ENCODE measurements at regions of chr20 and their contacts with region 1.

Region 1: DNA sequence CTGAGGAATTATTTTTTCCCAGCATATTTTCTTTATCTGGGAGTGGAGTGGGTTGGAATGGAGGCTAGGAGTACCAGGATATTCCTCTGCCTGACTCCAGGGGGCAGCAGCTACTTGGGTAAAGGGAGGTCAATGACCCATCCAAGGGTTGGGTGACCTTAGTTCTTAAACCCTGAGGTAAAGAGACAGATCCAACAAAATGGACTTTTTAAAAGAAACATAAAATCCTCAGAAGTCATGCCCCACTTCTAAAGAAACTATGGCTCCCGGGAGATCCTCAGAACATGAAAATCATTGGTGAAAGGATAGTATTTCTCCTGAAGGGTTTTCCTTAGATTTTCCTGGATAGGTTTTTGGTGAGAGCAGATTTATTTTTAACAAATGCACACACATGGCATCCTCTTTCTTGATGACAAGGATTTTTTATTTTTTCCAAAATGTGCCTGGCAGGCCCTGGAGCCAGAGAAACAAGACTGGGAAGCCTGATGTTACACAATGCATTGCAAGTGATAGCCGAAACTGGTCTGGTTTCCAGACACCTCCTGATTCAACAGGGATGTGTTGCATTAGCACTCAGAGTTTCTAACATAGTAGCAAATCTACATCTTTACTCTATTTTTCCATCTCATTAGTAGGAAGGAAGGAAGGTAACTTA is 240.9 kb upstream of the BTBD3 start:
- DNase-seq: peak; percentile 42
- ATAC-seq: peak; percentile 99
- H3K4me3 ChIP-seq: no peak overlapping the region
- H3K27ac ChIP-seq: no peak overlapping the region
- H3K4me1 ChIP-seq: no peaks in the 10 kb centered on the region
- H3K27me3 ChIP-seq: peaks cover 3% of the 10 kb centered on the region; the same call in 1 of the 2 replicates
- CTCF ChIP-seq: peak; percentile 91
- POLR2A ChIP-seq: no peak
- RAD21 ChIP-seq: peak; percentile 97

Region 2: GRCh38 chr20:11229772-11230171 is 447.0 kb before region 1 on chr20:
- CTCF ChIA-PET with region 1: no interaction called
- POLR2A ChIA-PET with region 1: no interaction called
- dilution Hi-C with region 1: no loop called
- in situ Hi-C with region 1: no loop called
- intact Hi-C with region 1: no loop called
- DNase-seq: peak; percentile 99
- ATAC-seq: peak; percentile 89
- H3K4me3 ChIP-seq: no peak overlapping the region
- H3K27ac ChIP-seq: peak overlapping the region; percentile 64
- H3K4me1 ChIP-seq: peaks cover 3% of the 10 kb centered on the region
- H3K27me3 ChIP-seq: no peaks in the 10 kb centered on the region
- CTCF ChIP-seq: no peak
- POLR2A ChIP-seq: no peak
- RAD21 ChIP-seq: peak; percentile 35; the same call in 1 of the 2 replicates

Region 3: GRCh38 chr20:11890331-11891080 is 213.7 kb after region 1 on chr20:
- CTCF ChIA-PET with region 1: no interaction called
- POLR2A ChIA-PET with region 1: no interaction called
- dilution Hi-C with region 1: no loop called
- in situ Hi-C with region 1: no loop called
- intact Hi-C with region 1: loop called (anchors 1 kb)
- DNase-seq: peak; percentile 91
- ATAC-seq: peak; percentile 91
- H3K4me3 ChIP-seq: peak overlapping the region; percentile 85
- H3K27ac ChIP-seq: peak overlapping the region; percentile 79
- H3K4me1 ChIP-seq: peaks cover 3% of the 10 kb centered on the region; the same call in 1 of the 2 replicates
- H3K27me3 ChIP-seq: no peaks in the 10 kb centered on the region
- CTCF ChIP-seq: no peak
- POLR2A ChIP-seq: 0 out of 2 replicates have a peak, but pooled peaks have one; percentile 21
- RAD21 ChIP-seq: no peak

Region 4: DNA sequence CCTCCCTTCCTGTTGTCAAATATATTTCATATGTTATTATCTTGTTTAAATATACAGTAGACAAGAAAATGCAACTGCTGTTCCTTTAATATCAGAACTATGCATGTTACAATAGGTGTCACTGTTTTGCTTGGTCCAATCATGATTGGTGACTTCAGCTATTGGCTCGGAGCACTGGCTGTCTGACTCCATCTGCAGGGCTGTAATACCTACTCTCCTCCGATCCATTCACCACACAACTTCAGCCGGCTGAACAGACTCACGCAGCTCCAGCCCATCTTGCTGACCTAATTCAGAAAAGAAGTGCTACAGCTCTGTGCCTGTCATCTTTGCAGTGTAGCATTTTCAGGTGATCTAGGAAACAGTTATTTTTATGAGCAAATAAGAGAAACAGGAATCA is 240.9 kb after region 1 on chr20 and contains the start of gene BTBD3:
- CTCF ChIA-PET with region 1: no interaction called
- POLR2A ChIA-PET with region 1: no interaction called
- dilution Hi-C with region 1: no loop called
- in situ Hi-C with region 1: no loop called
- intact Hi-C with region 1: loop called (anchors 2 kb)
- DNase-seq: peak; percentile 79
- ATAC-seq: peak; percentile 96
- H3K4me3 ChIP-seq: peak within 1 kb of the TSS; percentile 45
- H3K27ac ChIP-seq: peak within 1 kb of the TSS; percentile 29; the same call in 1 of the 2 replicates
- H3K4me1 ChIP-seq: peaks cover 8% of the 10 kb centered on the region
- H3K27me3 ChIP-seq: no peaks in the 10 kb centered on the region
- CTCF ChIP-seq: no peak
- POLR2A ChIP-seq: peak; percentile 62; the same call in 1 of the 2 replicates
- RAD21 ChIP-seq: peak; percentile 23; the same call in 1 of the 2 replicates
- total RNA-seq, gene BTBD3: 44.6 and 44.7 TPM in 2 replicates

Region 5: DNA sequence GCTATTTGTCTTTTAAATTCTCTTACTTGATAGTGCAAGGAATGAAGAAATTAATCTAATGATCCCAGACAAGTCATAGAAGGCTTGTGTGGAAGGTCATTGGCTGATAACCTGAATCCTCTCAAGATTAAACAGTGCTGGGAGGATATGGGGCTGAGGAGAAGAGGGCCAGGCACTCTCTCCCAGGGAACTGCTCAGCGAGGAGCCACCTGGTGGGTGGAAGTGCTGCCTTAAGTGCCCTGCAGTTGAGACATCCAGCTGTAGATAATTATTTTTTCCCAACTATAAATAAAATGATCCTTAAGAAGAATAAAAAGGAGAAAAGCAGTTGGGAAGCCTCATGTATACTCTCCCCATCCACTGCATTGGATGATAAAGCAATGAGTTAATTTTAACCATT is 288.8 kb after region 1 on chr20:
- CTCF ChIA-PET with region 1: no interaction called
- POLR2A ChIA-PET with region 1: no interaction called
- dilution Hi-C with region 1: no loop called
- in situ Hi-C with region 1: no loop called
- intact Hi-C with region 1: loop called (anchors 5 kb)
- DNase-seq: peak; percentile 4
- ATAC-seq: no peak
- H3K4me3 ChIP-seq: no peak overlapping the region
- H3K27ac ChIP-seq: no peak overlapping the region
- H3K4me1 ChIP-seq: peaks cover 2% of the 10 kb centered on the region; the same call in 1 of the 2 replicates
- H3K27me3 ChIP-seq: no peaks in the 10 kb centered on the region; the same call in 1 of the 2 replicates
- CTCF ChIP-seq: 0 out of 2 replicates have a peak, but pooled peaks have one; percentile 1
- POLR2A ChIP-seq: no peak
- RAD21 ChIP-seq: 0 out of 2 replicates have a peak, but pooled peaks have one; percentile 9

Region 6: DNA sequence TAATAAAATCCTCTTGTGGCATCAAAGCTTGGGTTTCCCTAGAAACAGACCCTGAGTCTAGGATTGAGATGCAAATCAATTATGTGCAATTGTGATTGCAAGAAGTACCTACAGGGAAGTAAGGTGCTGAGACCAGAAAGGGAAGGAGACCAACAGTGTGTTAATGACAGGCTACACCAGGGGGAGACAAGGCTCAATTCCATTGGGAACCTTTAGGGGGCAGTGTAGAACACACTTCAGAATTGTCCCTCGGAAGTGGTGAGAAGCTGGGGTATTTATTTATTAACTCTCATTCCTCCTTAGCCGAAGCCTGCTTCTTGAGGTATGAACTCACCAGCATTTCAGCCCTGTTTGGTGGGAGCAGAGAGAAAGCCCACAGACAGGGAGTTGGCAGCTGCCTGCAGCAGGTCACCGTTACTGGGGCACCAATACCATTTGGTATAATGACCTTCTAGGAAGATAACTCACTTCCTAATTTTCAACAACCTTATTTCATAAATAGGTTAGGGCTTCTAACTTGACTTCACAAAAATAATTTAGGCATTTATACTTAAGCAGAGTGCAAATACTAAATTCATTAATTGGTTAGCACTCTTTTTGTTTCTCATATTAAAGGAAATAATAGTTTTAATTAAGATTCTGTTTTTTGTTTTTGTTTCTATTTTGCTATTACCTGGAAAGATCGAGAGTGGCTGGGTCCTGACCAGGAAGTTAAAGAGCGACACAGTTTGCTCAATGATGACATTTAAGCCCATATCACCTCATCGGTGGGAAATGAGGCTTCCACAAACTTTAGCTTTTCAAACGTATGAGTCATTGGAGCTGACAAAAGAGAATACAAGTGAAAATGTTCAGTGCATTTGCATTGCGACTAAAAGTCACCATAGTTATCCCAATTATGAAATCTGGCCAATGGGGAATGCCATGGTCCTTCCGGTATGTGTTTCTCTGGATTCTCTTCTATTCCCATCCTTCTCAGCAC is 335.8 kb after region 1 on chr20:
- CTCF ChIA-PET with region 1: interaction called, 3 read pairs
- POLR2A ChIA-PET with region 1: no interaction called
- dilution Hi-C with region 1: no loop called
- in situ Hi-C with region 1: no loop called
- intact Hi-C with region 1: loop called (anchors 5 kb)
- DNase-seq: peak; percentile 52
- ATAC-seq: peak; percentile 79
- H3K4me3 ChIP-seq: no peak overlapping the region
- H3K27ac ChIP-seq: no peak overlapping the region
- H3K4me1 ChIP-seq: no peaks in the 10 kb centered on the region
- H3K27me3 ChIP-seq: no peaks in the 10 kb centered on the region; the same call in 1 of the 2 replicates
- CTCF ChIP-seq: peak; percentile 99
- POLR2A ChIP-seq: no peak
- RAD21 ChIP-seq: peak; percentile 73

Region 7: GRCh38 chr20:12207875-12208274 is 531.1 kb after region 1 on chr20:
- CTCF ChIA-PET with region 1: interaction called, 9 read pairs
- POLR2A ChIA-PET with region 1: no interaction called
- dilution Hi-C with region 1: no loop called
- in situ Hi-C with region 1: loop called (anchors 5 kb)
- intact Hi-C with region 1: loop called (anchors 1 kb)
- DNase-seq: peak; percentile 41
- ATAC-seq: peak; percentile 85
- H3K4me3 ChIP-seq: no peak overlapping the region
- H3K27ac ChIP-seq: no peak overlapping the region
- H3K4me1 ChIP-seq: no peaks in the 10 kb centered on the region
- H3K27me3 ChIP-seq: no peaks in the 10 kb centered on the region
- CTCF ChIP-seq: peak; percentile 61
- POLR2A ChIP-seq: no peak
- RAD21 ChIP-seq: peak; percentile 67

Region 8: DNA sequence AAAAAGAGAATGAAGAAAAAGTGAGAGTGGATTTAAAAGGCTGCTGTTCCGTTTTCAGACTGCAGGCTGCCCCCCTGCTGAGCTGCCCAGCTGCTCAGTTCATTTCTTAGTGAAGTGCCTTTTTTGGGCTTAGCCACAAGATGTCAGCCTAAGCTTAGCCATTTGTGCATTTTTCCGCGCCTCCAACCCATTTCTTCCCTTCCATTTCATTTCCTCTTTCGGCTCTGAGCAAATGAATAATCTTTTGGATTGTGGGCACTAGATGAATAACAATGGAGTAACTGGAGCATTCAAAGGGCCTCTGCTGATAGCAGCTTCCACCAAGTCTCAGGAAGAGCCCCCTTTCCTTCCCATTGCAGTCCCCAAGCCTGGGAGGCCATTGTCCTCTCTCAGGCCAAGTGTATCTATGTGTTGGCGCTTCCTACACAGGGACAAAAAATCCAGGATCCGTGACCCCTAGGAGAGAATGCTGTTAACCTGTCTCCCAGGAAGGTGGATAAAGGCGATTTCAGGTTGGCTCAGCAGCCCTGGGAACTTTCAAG is 1248.5 kb after region 1 on chr20:
- CTCF ChIA-PET with region 1: no interaction called
- POLR2A ChIA-PET with region 1: no interaction called
- dilution Hi-C with region 1: no loop called
- in situ Hi-C with region 1: no loop called
- intact Hi-C with region 1: loop called (anchors 2 kb)
- DNase-seq: peak; percentile 85
- ATAC-seq: peak; percentile 81
- H3K4me3 ChIP-seq: no peak overlapping the region
- H3K27ac ChIP-seq: no peak overlapping the region
- H3K4me1 ChIP-seq: peaks cover 17% of the 10 kb centered on the region
- H3K27me3 ChIP-seq: peaks cover 2% of the 10 kb centered on the region; the same call in 1 of the 2 replicates
- CTCF ChIP-seq: peak; percentile 100
- POLR2A ChIP-seq: peak; percentile 47
- RAD21 ChIP-seq: peak; percentile 98

Measured in IMR-90 (cell line).